Endothelial cell of umbilical vein (primary cell): ENCODE measurements at regions of chr10 and their contacts with region 1.

Region 1: GRCh38 chr10:119686439-119687191 is 35.4 kb downstream of the BAG3 start:
- DNase-seq: peak; percentile 94
- H3K4me3 ChIP-seq: peak overlapping the region in 2 of 3 experiments; percentile 20 to 26
- H3K27ac ChIP-seq: peak overlapping the region; percentile 88
- H3K4me1 ChIP-seq: peaks cover 13% of the 10 kb centered on the region
- H3K27me3 ChIP-seq: no peaks in the 10 kb centered on the region
- CTCF ChIP-seq: peak; percentile 89
- POLR2A ChIP-seq: peak; percentile 66

Region 2: DNA sequence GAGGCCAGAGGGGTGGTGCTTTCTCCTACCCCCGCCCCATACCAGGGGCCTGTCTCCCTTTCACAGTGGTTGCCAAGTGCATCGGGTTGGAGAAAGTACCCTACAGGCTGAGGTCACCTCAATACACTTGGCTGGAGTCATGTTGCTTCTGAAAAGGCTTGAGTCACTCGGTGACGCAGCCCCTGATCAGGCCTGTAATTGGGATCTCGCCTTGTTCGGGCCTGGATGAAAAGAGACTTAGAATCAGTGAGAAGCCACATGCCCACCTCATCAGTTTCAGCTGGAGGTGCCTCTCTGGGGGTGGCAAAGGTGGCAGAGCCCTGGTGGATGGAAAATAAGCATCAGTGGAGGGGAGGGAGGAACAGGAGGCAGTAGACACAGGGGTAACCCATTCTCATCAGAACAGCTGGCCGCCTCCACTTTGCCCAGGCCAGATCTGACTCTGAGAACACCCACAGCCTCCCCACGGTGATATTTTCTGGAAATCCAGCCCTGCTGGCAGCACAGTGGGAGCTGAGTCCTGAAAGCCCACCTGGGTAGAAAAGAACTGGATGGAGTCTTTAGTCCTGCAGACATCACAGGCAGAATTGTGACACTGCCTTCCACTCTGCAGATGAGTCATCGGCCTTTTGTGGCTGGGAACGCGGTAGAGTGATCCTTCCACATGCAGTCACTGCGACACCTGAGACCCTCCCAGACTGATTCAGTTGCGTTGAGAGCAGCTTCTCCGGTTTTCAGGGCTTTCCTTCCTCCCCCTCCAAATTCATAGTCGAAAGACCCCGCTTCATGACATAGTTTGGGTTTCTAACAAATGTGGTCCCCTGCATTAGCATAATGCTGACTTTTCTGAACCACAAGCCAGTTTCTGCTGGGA is 371.2 kb before region 1 on chr10:
- CTCF ChIA-PET with region 1: no interaction called
- POLR2A ChIA-PET with region 1: no interaction called
- dilution Hi-C with region 1: no loop called
- intact Hi-C with region 1: no loop called
- DNase-seq: peak; percentile 57
- H3K4me3 ChIP-seq: no peak overlapping the region
- H3K27ac ChIP-seq: peak overlapping the region; percentile 94
- H3K4me1 ChIP-seq: peaks cover 35% of the 10 kb centered on the region
- H3K27me3 ChIP-seq: no peaks in the 10 kb centered on the region
- CTCF ChIP-seq: no peak
- POLR2A ChIP-seq: no peak

Region 3: GRCh38 chr10:119650692-119651513 is 35.7 kb before region 1 on chr10 and contains the start of gene BAG3:
- CTCF ChIA-PET with region 1: interaction called, 12 read pairs
- POLR2A ChIA-PET with region 1: interaction called, 9 read pairs
- dilution Hi-C with region 1: no loop called
- intact Hi-C with region 1: loop called (anchors 1 kb)
- DNase-seq: peak; percentile 84
- H3K4me3 ChIP-seq: peak within 1 kb of the TSS; percentile 86 to 97 (median 93)
- H3K27ac ChIP-seq: peak within 1 kb of the TSS; percentile 56
- H3K4me1 ChIP-seq: peaks cover 34% of the 10 kb centered on the region
- H3K27me3 ChIP-seq: no peaks in the 10 kb centered on the region
- CTCF ChIP-seq: no peak
- POLR2A ChIP-seq: peak; percentile 99
- total RNA-seq, gene BAG3: 65.4 and 66.7 TPM in 2 replicates

Region 4: GRCh38 chr10:119737827-119738226 is 51.2 kb after region 1 on chr10:
- CTCF ChIA-PET with region 1: interaction called, 7 read pairs
- POLR2A ChIA-PET with region 1: interaction called, 4 read pairs
- dilution Hi-C with region 1: no loop called
- intact Hi-C with region 1: loop called (anchors 1 kb)
- DNase-seq: peak; percentile 94
- H3K4me3 ChIP-seq: peak overlapping the region in 1 of 3 experiments; percentile 31
- H3K27ac ChIP-seq: peak overlapping the region; percentile 62
- H3K4me1 ChIP-seq: peaks cover 24% of the 10 kb centered on the region
- H3K27me3 ChIP-seq: no peaks in the 10 kb centered on the region
- CTCF ChIP-seq: no peak
- POLR2A ChIP-seq: no peak

Region 5: GRCh38 chr10:119834188-119834587 is 147.6 kb after region 1 on chr10:
- CTCF ChIA-PET with region 1: interaction called, 3 read pairs
- POLR2A ChIA-PET with region 1: no interaction called
- dilution Hi-C with region 1: no loop called
- intact Hi-C with region 1: loop called (anchors 2 kb)
- DNase-seq: no peak
- H3K4me3 ChIP-seq: no peak overlapping the region
- H3K27ac ChIP-seq: no peak overlapping the region
- H3K4me1 ChIP-seq: no peaks in the 10 kb centered on the region
- H3K27me3 ChIP-seq: no peaks in the 10 kb centered on the region
- CTCF ChIP-seq: no peak
- POLR2A ChIP-seq: no peak

Region 6: GRCh38 chr10:119872860-119873681 is 186.5 kb after region 1 on chr10:
- CTCF ChIA-PET with region 1: interaction called, 17 read pairs
- POLR2A ChIA-PET with region 1: no interaction called
- dilution Hi-C with region 1: no loop called
- intact Hi-C with region 1: no loop called
- DNase-seq: peak; percentile 92
- H3K4me3 ChIP-seq: peak overlapping the region; percentile 20 to 96 (median 96)
- H3K27ac ChIP-seq: peak overlapping the region; percentile 81
- H3K4me1 ChIP-seq: peaks cover 18% of the 10 kb centered on the region
- H3K27me3 ChIP-seq: no peaks in the 10 kb centered on the region
- CTCF ChIP-seq: no peak
- POLR2A ChIP-seq: peak; percentile 79

Region 7: GRCh38 chr10:120336911-120337540 is 650.4 kb after region 1 on chr10:
- CTCF ChIA-PET with region 1: interaction called, 10 read pairs
- POLR2A ChIA-PET with region 1: no interaction called
- dilution Hi-C with region 1: no loop called
- intact Hi-C with region 1: no loop called
- DNase-seq: peak; percentile 66
- H3K4me3 ChIP-seq: no peak overlapping the region
- H3K27ac ChIP-seq: no peak overlapping the region
- H3K4me1 ChIP-seq: no peaks in the 10 kb centered on the region
- H3K27me3 ChIP-seq: peaks cover 0 to 2% of the 10 kb centered on the region in 2 experiments
- CTCF ChIP-seq: peak; percentile 82 to 85
- POLR2A ChIP-seq: no peak

Region 8: GRCh38 chr10:120850911-120851865 is 1164.6 kb after region 1 on chr10 and contains the start of gene WDR11:
- CTCF ChIA-PET with region 1: no interaction called
- POLR2A ChIA-PET with region 1: no interaction called
- dilution Hi-C with region 1: no loop called
- intact Hi-C with region 1: loop called (anchors 1 kb)
- DNase-seq: peak; percentile 88
- H3K4me3 ChIP-seq: peak within 1 kb of the TSS; percentile 42 to 92 (median 87)
- H3K27ac ChIP-seq: peak within 1 kb of the TSS; percentile 64
- H3K4me1 ChIP-seq: peaks cover 11% of the 10 kb centered on the region
- H3K27me3 ChIP-seq: no peaks in the 10 kb centered on the region
- CTCF ChIP-seq: no peak
- POLR2A ChIP-seq: peak; percentile 95
- total RNA-seq, gene WDR11: 58.9 and 73.9 TPM in 2 replicates